Ascending aorta (tissue), 2 donors: ENCODE measurements at regions of chr19 and their contacts with region 1.

Region 1: GRCh38 chr19:2782936-2783780 is at the start of gene SGTA:
- DNase-seq: peak; percentile 92 to 99
- H3K4me3 ChIP-seq: peak within 1 kb of the TSS; percentile 77 to 78
- H3K27ac ChIP-seq: peak within 1 kb of the TSS; percentile 82 to 88
- H3K4me1 ChIP-seq: peaks cover 12 to 35% of the 10 kb centered on the region in 2 donors
- H3K27me3 ChIP-seq: no peaks in the 10 kb centered on the region
- CTCF ChIP-seq: peak; percentile 33 to 55 (median 41)
- total RNA-seq, gene SGTA: 29.8 TPM

Region 2: DNA sequence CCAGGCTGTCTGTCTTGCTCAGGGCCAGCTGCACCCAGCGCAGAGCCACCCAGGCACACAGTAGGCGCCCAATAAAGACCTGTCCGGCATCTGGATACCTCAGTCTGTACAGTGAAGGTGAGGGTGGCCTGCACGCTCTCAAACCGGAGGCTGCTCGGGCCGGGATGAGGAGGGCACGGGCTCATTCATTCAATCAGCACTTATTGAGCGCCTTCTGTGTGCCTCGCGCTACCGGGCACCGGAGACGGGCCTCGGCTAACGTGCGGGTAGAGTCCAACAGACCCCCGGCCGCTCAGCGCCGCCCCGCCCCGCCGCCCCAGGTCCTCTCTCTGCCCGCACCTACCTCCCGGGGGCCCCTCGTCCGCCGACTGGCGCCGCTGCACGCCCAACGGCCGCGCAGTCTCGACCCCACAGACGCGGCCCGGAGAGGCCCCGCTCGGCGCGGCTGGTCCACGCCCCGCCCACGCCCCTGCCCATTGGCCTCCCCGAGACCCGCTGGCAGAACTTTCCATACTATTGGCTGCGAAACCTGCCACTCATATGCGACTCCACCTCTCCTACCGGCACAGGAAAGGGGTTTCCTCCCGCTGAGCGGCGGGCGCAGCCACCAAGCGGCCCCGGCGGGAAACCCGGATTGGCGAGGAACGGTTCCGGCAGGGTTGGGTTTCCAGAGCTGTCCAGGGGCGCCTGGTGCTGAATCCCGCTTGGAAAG is 43.4 kb before region 1 on chr19 and contains the start of gene SLC39A3:
- intact Hi-C with region 1: loop called (anchors 1 kb)
- DNase-seq: peak; percentile 94 to 99
- H3K4me3 ChIP-seq: peak within 1 kb of the TSS; percentile 96 to 100
- H3K27ac ChIP-seq: peak within 1 kb of the TSS; percentile 53
- H3K4me1 ChIP-seq: peaks cover 6 to 11% of the 10 kb centered on the region in 2 donors
- H3K27me3 ChIP-seq: no peaks in the 10 kb centered on the region
- CTCF ChIP-seq: peak; percentile 20 to 40 (median 27)
- total RNA-seq, gene SLC39A3: 72.7 TPM

Region 3: DNA sequence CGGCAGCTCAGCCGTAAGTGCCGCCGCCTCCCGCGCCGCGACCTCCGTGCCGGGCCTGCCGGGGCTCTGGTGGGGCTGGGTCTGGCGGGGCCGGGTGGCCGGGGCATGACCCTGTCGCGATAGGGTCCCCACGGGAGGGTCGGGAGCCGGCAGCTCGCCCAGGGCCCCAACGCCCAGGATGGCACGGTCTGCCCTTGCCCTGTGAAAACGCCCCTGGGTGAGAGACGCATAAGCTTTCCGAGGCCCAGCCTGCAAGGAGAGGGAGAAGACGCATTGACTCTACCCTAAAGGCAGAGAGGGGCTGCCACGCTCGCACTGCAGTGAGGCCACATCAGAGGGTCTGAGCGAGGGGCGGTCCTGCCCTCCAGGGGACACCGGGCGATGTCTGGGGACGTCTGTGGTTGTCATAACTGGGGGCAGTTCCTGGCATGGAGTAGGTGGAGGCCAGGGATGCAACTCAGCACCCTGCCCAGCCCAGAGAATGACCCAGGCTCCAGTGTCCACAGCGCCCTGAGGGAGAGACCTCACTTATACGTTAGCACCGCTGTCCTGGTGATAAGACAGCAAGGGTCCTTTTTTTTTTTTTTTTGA is 37.0 kb after region 1 on chr19:
- intact Hi-C with region 1: loop called (anchors 1 kb)
- DNase-seq: no peak
- H3K4me3 ChIP-seq: peak overlapping the region; percentile 97 to 98
- H3K27ac ChIP-seq: peak overlapping the region in 1 of 2 donors; percentile 29
- H3K4me1 ChIP-seq: peaks cover 3 to 10% of the 10 kb centered on the region in 2 donors
- H3K27me3 ChIP-seq: no peaks in the 10 kb centered on the region
- CTCF ChIP-seq: no peak

Region 4: GRCh38 chr19:2840794-2841790 is 57.9 kb after region 1 on chr19 and contains the start of gene ZNF555:
- intact Hi-C with region 1: loop called (anchors 1 kb)
- DNase-seq: peak; percentile 99 to 100
- H3K4me3 ChIP-seq: peak within 1 kb of the TSS; percentile 96 to 99
- H3K27ac ChIP-seq: peak within 1 kb of the TSS; percentile 95
- H3K4me1 ChIP-seq: peaks cover 0 to 10% of the 10 kb centered on the region in 2 donors
- H3K27me3 ChIP-seq: no peaks in the 10 kb centered on the region
- CTCF ChIP-seq: peak; percentile 32 to 74 (median 61)
- total RNA-seq, gene ZNF555: 6.8 TPM

Region 5: GRCh38 chr19:2900296-2901252 is 117.4 kb after region 1 on chr19 and contains the start of gene ZNF57:
- intact Hi-C with region 1: loop called (anchors 1 kb)
- DNase-seq: peak; percentile 99 to 100
- H3K4me3 ChIP-seq: peak within 1 kb of the TSS; percentile 71 to 82
- H3K27ac ChIP-seq: peak within 1 kb of the TSS; percentile 63 to 69
- H3K4me1 ChIP-seq: peaks cover 0 to 3% of the 10 kb centered on the region in 2 donors
- H3K27me3 ChIP-seq: no peaks in the 10 kb centered on the region
- CTCF ChIP-seq: peak in 1 of 3 experiments; percentile 12
- total RNA-seq, gene ZNF57: 9.8 TPM

Region 6: GRCh38 chr19:3626473-3627350 is 843.6 kb after region 1 on chr19 and contains the start of gene CACTIN:
- intact Hi-C with region 1: loop called (anchors 2 kb)
- DNase-seq: peak; percentile 94 to 99
- H3K4me3 ChIP-seq: peak within 1 kb of the TSS; percentile 74 to 94
- H3K27ac ChIP-seq: peak within 1 kb of the TSS; percentile 91 to 93
- H3K4me1 ChIP-seq: peaks cover 10 to 15% of the 10 kb centered on the region in 2 donors
- H3K27me3 ChIP-seq: no peaks in the 10 kb centered on the region
- CTCF ChIP-seq: no peak
- total RNA-seq, gene CACTIN: 57.6 TPM